ENCODE measurements at regions of chr3 and their contacts with region 1.

Region 1: GRCh38 chr3:129120254-129121004 is 1.2 kb downstream of the RAB43 start:
- DNase-seq: peak; percentile 87
- H3K4me3 ChIP-seq: peak overlapping the region; percentile 64 to 79 (median 66)
- H3K27ac ChIP-seq: peak overlapping the region; percentile 66
- H3K4me1 ChIP-seq: peaks cover 27% of the 10 kb centered on the region
- H3K27me3 ChIP-seq: no peaks in the 10 kb centered on the region
- CTCF ChIP-seq: peak in 1 of 2 donors; percentile 22
- POLR2A ChIP-seq: peak; percentile 79

Region 2: GRCh38 chr3:128153156-128154041 is 967.0 kb before region 1 on chr3 and contains the start of gene EEFSEC:
- CTCF ChIA-PET with region 1: no interaction called
- POLR2A ChIA-PET with region 1: interaction called, 11 read pairs
- dilution Hi-C with region 1: no loop called
- intact Hi-C with region 1: no loop called
- DNase-seq: peak; percentile 79
- H3K4me3 ChIP-seq: peak within 1 kb of the TSS; percentile 67 to 84 (median 70)
- H3K27ac ChIP-seq: peak within 1 kb of the TSS; percentile 18
- H3K4me1 ChIP-seq: peaks cover 3% of the 10 kb centered on the region
- H3K27me3 ChIP-seq: peaks cover 0 to 2% of the 10 kb centered on the region in 2 experiments
- CTCF ChIP-seq: no peak
- POLR2A ChIP-seq: peak; percentile 60
- total RNA-seq, gene EEFSEC: 12.0 and 13.1 TPM in 2 replicates

Region 3: GRCh38 chr3:128917291-128917690 is 203.1 kb before region 1 on chr3:
- CTCF ChIA-PET with region 1: no interaction called
- POLR2A ChIA-PET with region 1: no interaction called
- dilution Hi-C with region 1: loop called (anchors 25 kb)
- intact Hi-C with region 1: no loop called
- DNase-seq: no peak
- H3K4me3 ChIP-seq: no peak overlapping the region
- H3K27ac ChIP-seq: no peak overlapping the region
- H3K4me1 ChIP-seq: no peaks in the 10 kb centered on the region
- H3K27me3 ChIP-seq: no peaks in the 10 kb centered on the region
- CTCF ChIP-seq: no peak
- POLR2A ChIP-seq: no peak

Measured in endothelial cell of umbilical vein (primary cell).